SK-N-SH (cell line): ENCODE measurements at regions of chr5 and their contacts with region 1.

Region 1: DNA sequence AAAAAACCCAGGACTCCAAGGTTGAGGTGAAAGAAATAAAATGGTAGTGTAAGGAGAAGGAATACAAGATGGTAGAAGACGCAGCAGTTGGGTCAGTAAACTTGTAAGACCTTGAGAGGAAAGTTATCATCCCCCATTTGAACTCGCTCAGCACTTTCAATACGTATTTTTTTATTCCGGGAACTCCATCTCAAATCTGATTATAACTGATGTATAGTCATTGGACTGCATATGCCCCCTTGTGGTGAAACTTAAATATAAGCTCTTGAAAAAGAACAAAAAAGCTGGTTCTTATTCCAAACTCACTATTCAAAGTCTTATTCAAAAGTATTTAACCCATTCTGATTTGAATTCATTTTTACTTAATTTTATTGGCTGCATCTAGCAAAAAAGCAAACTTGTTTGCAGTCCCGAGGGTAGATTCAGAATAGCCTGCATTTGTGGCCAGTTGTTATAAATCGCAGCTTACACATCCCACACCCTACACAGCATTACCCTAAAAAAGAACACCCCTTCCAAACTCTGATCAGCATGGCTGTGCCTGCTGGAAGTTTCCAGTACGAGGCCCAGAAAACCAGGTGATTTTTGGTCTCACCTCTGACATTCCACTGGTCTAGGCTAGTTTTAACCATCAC is 118.0 kb downstream of the ESM1 start:
- DNase-seq: peak; percentile 61
- H3K4me3 ChIP-seq: peak overlapping the region; percentile 10 to 44; a peak in 1 of 4 replicates
- H3K27ac ChIP-seq: no peak overlapping the region
- H3K4me1 ChIP-seq: no peaks in the 10 kb centered on the region; a peak in 1 of 4 replicates
- H3K27me3 ChIP-seq: peaks cover 43% of the 10 kb centered on the region; the same call in 1 of the 2 replicates
- CTCF ChIP-seq: peak; percentile 84
- EP300 ChIP-seq: no peak
- RAD21 ChIP-seq: peak; percentile 66

Region 2: GRCh38 chr5:54443270-54443669 is 424.2 kb before region 1 on chr5:
- CTCF ChIA-PET with region 1: interaction called, 17 read pairs
- POLR2A ChIA-PET with region 1: no interaction called
- DNase-seq: peak; percentile 40
- H3K4me3 ChIP-seq: no peak overlapping the region
- H3K27ac ChIP-seq: no peak overlapping the region
- H3K4me1 ChIP-seq: no peaks in the 10 kb centered on the region; a peak in 1 of 4 replicates
- H3K27me3 ChIP-seq: no peaks in the 10 kb centered on the region; the same call in 1 of the 2 replicates
- CTCF ChIP-seq: peak; percentile 68
- EP300 ChIP-seq: no peak
- RAD21 ChIP-seq: peak; percentile 59

Region 3: DNA sequence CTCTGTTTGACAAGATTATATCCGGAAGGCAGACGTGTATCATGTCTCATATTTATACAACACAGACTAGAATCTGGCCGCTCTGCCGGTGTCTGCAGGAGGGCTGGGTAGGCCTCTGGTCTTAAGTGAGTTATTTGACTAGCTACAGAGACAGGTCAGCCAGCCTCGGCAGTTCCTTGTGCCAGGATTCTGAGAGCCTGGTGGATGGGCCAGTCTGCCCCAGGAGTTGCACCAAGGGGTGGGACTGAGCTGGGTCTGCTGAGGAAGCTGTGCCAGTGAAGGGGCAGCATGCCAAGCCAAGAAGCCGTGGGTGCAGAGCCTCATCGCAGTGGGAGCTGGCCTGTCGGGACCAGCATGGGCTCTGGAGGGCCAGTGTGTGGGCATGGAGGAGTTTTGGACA is 342.7 kb before region 1 on chr5:
- CTCF ChIA-PET with region 1: interaction called, 15 read pairs
- POLR2A ChIA-PET with region 1: no interaction called
- DNase-seq: peak; percentile 64
- H3K4me3 ChIP-seq: no peak overlapping the region
- H3K27ac ChIP-seq: peak overlapping the region in 1 of 2 experiments; percentile 43; a peak in 2 of 4 replicates
- H3K4me1 ChIP-seq: peaks cover 3 to 39% of the 10 kb centered on the region in 2 experiments; a peak in 3 of 4 replicates
- H3K27me3 ChIP-seq: no peaks in the 10 kb centered on the region
- CTCF ChIP-seq: no peak
- EP300 ChIP-seq: peak in 1 of 2 experiments; percentile 45; a peak in 1 of 4 replicates
- RAD21 ChIP-seq: no peak

Region 4: GRCh38 chr5:54844905-54845566 is 22.4 kb before region 1 on chr5:
- CTCF ChIA-PET with region 1: interaction called, 33 read pairs
- POLR2A ChIA-PET with region 1: no interaction called
- DNase-seq: peak; percentile 15
- H3K4me3 ChIP-seq: no peak overlapping the region
- H3K27ac ChIP-seq: no peak overlapping the region
- H3K4me1 ChIP-seq: peaks cover 0 to 3% of the 10 kb centered on the region in 2 experiments; a peak in 1 of 4 replicates
- H3K27me3 ChIP-seq: peaks cover 14% of the 10 kb centered on the region; the same call in 1 of the 2 replicates
- CTCF ChIP-seq: peak; percentile 72
- EP300 ChIP-seq: no peak
- RAD21 ChIP-seq: peak; percentile 80

Region 5: GRCh38 chr5:54852007-54852406 is 15.4 kb before region 1 on chr5:
- CTCF ChIA-PET with region 1: interaction called, 33 read pairs
- POLR2A ChIA-PET with region 1: no interaction called
- DNase-seq: no peak
- H3K4me3 ChIP-seq: no peak overlapping the region
- H3K27ac ChIP-seq: no peak overlapping the region
- H3K4me1 ChIP-seq: no peaks in the 10 kb centered on the region
- H3K27me3 ChIP-seq: peaks cover 14% of the 10 kb centered on the region; the same call in 1 of the 2 replicates
- CTCF ChIP-seq: peak; percentile 29; the same call in 1 of the 2 replicates
- EP300 ChIP-seq: no peak
- RAD21 ChIP-seq: no peak

Region 6: DNA sequence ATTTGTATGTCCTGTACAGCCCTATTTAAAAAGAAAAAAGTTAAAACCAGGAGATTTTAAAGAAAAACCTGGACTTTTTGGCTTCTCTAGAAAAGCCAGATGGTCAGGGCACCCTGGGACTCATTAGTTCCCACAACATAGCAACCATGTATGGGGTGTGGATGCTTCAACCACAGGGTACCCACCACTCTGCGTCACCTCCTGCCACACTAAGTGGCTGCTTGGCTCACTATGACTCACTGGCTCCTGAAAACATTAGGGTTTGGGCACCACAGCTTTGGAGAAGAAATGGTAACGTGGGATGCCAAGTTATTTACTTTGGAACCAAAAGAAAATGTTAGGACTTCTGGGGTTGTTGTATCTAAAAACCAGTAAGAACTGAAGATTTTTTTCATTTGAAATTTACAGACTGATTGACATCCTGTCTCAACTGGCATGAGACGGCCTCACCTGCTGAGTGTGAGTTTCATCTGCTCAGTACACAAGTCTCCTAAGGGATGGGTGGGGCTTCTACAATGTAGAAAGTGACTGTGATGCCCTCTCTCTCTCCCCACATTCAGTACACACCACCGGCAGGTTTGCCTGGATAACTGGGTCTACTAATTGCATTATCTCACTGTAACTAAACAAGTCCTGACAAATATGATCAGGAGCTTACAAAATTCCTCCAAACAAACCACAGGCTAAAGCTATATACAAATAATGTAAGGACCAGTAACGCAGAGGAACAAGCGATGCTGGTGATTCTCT is 14.0 kb after region 1 on chr5:
- CTCF ChIA-PET with region 1: interaction called, 23 read pairs
- POLR2A ChIA-PET with region 1: no interaction called
- DNase-seq: no peak
- H3K4me3 ChIP-seq: no peak overlapping the region
- H3K27ac ChIP-seq: no peak overlapping the region
- H3K4me1 ChIP-seq: no peaks in the 10 kb centered on the region; a peak in 1 of 4 replicates
- H3K27me3 ChIP-seq: peaks cover 49% of the 10 kb centered on the region; the same call in 1 of the 2 replicates
- CTCF ChIP-seq: no peak
- EP300 ChIP-seq: no peak
- RAD21 ChIP-seq: no peak